Activated T-helper 2 cell treated with anti-CD3 and anti-CD28 coated beads, Interferon-gamma antibody, Interleukin-2, Interleukin-4, amounts not matched to agents 10 μg/mL and 5 μg/mL and 100 μg/mL, durations not matched to agents 14 hours and 24 hours and 36 hours (primary cell): ENCODE measurements at regions of chr12 and their contacts with region 1.

Region 1: DNA sequence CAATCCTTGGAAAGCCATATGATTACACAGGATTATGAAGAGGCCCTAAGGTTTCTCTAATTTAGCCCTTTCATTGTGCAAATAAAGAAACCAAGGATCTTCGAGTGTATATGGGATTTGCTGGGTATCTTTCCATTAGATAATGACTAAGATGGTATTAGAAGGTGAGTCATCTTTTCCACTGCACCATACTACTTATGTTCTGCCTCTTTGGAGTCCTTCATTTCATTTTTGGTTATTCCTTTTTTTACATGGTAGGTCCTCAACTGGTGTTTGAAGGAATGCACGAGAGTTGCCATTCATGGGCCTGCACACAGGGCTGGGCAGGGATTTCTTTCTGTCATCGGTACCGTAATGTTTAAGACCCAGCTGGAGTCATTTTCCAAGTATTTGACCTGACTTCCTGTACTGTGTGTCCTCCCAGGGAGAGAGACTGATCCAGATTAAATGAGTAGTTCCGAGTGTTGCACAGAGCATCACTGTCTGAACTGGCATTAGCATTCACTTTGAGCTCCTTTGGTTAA is 85.7 kb downstream of the BORCS5 start:
- DNase-seq: no peak
- H3K4me3 Mint-ChIP-seq: no peak overlapping the region
- H3K27ac Mint-ChIP-seq: peak overlapping the region; percentile 95
- H3K4me1 Mint-ChIP-seq: peaks cover 88% of the 10 kb centered on the region
- H3K27me3 Mint-ChIP-seq: no peaks in the 10 kb centered on the region

Region 2: GRCh38 chr12:12095021-12095420 is 347.6 kb before region 1 on chr12:
- intact Hi-C with region 1: no loop called
- DNase-seq: no peak
- H3K4me3 Mint-ChIP-seq: no peak overlapping the region
- H3K27ac Mint-ChIP-seq: no peak overlapping the region
- H3K4me1 Mint-ChIP-seq: no peaks in the 10 kb centered on the region
- H3K27me3 Mint-ChIP-seq: peaks cover 15% of the 10 kb centered on the region

Region 3: DNA sequence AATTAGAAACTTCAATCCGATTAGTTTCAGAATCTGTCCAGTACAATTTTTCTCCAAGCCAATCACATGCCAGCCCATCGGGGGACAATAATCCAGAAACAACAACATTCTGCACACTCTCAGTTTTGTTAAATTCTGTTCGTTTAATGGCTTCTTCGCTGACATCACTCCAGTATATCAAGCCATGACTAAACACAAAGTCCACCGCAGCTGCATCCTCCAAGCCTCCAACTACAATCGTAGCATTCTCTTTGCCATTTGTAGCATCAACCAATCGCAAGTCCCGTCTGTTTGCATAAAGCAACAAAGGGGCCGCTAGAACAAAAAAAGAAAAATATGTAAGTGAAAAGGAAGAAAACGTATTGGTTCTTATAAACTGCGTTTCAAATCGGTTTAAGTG is 198.3 kb before region 1 on chr12:
- intact Hi-C with region 1: no loop called
- DNase-seq: no peak
- H3K4me3 Mint-ChIP-seq: no peak overlapping the region
- H3K27ac Mint-ChIP-seq: no peak overlapping the region
- H3K4me1 Mint-ChIP-seq: peaks cover 3% of the 10 kb centered on the region
- H3K27me3 Mint-ChIP-seq: peaks cover 37% of the 10 kb centered on the region

Region 4: GRCh38 chr12:12356886-12357718 is 85.5 kb before region 1 on chr12 and contains the start of gene BORCS5:
- intact Hi-C with region 1: loop called (anchors 1 kb)
- DNase-seq: peak; percentile 98
- H3K4me3 Mint-ChIP-seq: peak within 1 kb of the TSS; percentile 96
- H3K27ac Mint-ChIP-seq: peak within 1 kb of the TSS; percentile 99
- H3K4me1 Mint-ChIP-seq: peaks cover 41% of the 10 kb centered on the region
- H3K27me3 Mint-ChIP-seq: no peaks in the 10 kb centered on the region
- total RNA-seq, gene BORCS5: 41.8 and 45.9 TPM in 2 replicates

Region 5: DNA sequence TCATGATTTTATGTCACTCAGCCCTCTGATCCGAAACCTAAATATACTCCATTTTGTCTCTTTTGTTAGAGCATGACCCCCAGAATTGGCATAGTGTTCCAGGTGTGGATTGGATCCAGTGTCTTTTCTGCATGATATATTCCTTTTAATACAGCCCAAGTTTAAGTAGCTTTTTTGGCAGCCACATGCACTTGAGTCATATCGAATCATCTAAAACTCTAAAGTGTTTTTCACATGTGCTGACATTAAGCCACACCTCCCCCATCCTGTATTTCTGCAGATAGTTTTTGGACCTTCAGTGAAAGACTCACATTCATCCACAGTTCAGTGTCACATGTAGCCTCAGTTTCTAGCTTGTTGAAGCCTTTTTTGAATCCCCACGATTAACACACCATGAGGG is 55.1 kb before region 1 on chr12:
- intact Hi-C with region 1: no loop called
- DNase-seq: no peak
- H3K4me3 Mint-ChIP-seq: no peak overlapping the region
- H3K27ac Mint-ChIP-seq: peak overlapping the region; percentile 87
- H3K4me1 Mint-ChIP-seq: peaks cover 40% of the 10 kb centered on the region
- H3K27me3 Mint-ChIP-seq: no peaks in the 10 kb centered on the region

Region 6: GRCh38 chr12:12403264-12404248 is 39.1 kb before region 1 on chr12:
- intact Hi-C with region 1: loop called (anchors 1 kb)
- DNase-seq: no peak
- H3K4me3 Mint-ChIP-seq: peak overlapping the region; percentile 49
- H3K27ac Mint-ChIP-seq: peak overlapping the region; percentile 90
- H3K4me1 Mint-ChIP-seq: peaks cover 58% of the 10 kb centered on the region
- H3K27me3 Mint-ChIP-seq: no peaks in the 10 kb centered on the region

Region 7: DNA sequence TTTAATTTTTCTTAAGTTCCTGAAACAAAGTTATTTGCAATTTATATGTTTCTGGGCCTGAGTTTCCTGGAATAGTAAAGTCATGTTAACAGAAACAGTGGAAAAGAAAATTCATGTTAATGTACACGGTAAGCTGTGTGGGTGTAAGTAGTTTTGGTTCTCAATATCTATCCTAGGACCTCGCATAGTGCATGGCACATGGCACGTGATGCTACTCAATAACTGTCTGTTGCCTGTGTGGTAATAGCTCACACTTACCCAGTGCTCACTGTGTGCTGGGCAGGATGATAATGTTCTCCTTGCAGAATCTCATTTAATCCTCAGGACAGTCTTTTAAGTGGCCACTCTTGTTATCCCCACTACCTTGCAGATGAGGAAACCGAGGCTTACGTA is 19.3 kb after region 1 on chr12:
- intact Hi-C with region 1: loop called (anchors 1 kb)
- DNase-seq: no peak
- H3K4me3 Mint-ChIP-seq: no peak overlapping the region
- H3K27ac Mint-ChIP-seq: peak overlapping the region; percentile 94
- H3K4me1 Mint-ChIP-seq: peaks cover 71% of the 10 kb centered on the region
- H3K27me3 Mint-ChIP-seq: no peaks in the 10 kb centered on the region

Region 8: GRCh38 chr12:12505544-12506495 is 63.2 kb after region 1 on chr12:
- intact Hi-C with region 1: loop called (anchors 1 kb)
- DNase-seq: no peak
- H3K4me3 Mint-ChIP-seq: peak overlapping the region; percentile 53
- H3K27ac Mint-ChIP-seq: peak overlapping the region; percentile 97
- H3K4me1 Mint-ChIP-seq: peaks cover 70% of the 10 kb centered on the region
- H3K27me3 Mint-ChIP-seq: no peaks in the 10 kb centered on the region

Region 9: DNA sequence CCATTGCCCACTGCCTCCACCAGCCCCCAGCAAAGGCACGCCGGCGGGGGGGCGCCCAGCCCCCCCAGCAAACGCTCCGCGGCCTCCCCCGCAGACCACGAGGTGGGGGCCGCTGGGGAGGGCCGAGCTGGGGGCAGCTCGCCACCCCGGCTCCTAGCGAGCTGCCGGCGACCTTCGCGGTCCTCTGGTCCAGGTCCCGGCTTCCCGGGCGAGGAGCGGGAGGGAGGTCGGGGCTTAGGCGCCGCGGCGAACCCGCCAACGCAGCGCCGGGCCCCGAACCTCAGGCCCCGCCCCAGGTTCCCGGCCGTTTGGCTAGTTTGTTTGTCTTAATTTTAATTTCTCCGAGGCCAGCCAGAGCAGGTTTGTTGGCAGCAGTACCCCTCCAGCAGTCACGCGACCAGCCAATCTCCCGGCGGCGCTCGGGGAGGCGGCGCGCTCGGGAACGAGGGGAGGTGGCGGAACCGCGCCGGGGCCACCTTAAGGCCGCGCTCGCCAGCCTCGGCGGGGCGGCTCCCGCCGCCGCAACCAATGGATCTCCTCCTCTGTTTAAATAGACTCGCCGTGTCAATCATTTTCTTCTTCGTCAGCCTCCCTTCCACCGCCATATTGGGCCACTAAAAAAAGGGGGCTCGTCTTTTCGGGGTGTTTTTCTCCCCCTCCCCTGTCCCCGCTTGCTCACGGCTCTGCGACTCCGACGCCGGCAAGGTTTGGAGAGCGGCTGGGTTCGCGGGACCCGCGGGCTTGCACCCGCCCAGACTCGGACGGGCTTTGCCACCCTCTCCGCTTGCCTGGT is 274.4 kb after region 1 on chr12 and contains the start of gene CDKN1B:
- intact Hi-C with region 1: loop called (anchors 5 kb)
- DNase-seq: peak; percentile 80
- H3K4me3 Mint-ChIP-seq: peak within 1 kb of the TSS; percentile 99
- H3K27ac Mint-ChIP-seq: peak within 1 kb of the TSS; percentile 98
- H3K4me1 Mint-ChIP-seq: peaks cover 52% of the 10 kb centered on the region
- H3K27me3 Mint-ChIP-seq: no peaks in the 10 kb centered on the region
- total RNA-seq, gene CDKN1B: 49.0 and 53.4 TPM in 2 replicates